Colonic mucosa (tissue), 4 donors: ENCODE measurements at regions of chr17 and their contacts with region 1.

Region 1: DNA sequence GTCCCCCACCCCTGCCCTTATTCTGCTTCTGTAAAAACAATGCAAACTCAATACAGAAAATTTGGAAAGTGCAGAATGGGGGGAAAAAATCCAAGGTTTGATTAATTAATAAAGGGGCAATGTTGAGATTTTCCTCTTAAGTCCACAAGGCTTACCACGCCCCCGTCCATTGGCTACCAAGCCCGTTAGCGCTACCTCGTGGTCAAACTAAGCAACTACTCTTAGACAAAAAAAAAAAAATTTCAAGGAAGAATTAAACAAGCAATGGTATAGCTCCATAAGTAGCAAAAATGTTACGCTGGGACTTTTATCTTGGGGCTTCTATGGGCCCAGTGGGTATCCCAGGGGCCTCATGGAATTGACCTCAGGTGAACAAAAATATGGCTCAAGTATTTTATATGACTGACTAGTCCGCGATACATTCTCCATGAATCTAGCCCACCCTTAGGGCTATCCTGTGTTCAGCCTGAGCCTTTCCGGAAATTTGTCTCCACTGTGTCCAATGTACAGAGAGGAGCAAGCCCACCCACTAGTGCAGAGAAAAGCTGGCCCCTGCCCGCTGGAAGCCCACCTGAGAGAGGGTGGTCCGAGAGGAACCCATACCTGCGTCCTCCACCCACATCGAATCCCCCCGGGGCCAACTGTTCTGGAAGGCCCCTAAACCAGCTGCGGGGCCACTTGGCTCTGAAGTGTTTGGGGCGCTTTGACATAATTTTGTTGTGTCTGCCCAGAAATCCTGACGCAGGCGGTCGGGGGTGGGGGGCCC is 19.1 kb upstream of the TEX2 start:
- DNase-seq: peak; percentile 32
- H3K4me3 ChIP-seq: no peak overlapping the region
- H3K27ac ChIP-seq: no peak overlapping the region
- H3K4me1 ChIP-seq: peaks cover 4% of the 10 kb centered on the region
- H3K27me3 ChIP-seq: no peaks in the 10 kb centered on the region
- CTCF ChIP-seq: peak; percentile 71

Region 2: DNA sequence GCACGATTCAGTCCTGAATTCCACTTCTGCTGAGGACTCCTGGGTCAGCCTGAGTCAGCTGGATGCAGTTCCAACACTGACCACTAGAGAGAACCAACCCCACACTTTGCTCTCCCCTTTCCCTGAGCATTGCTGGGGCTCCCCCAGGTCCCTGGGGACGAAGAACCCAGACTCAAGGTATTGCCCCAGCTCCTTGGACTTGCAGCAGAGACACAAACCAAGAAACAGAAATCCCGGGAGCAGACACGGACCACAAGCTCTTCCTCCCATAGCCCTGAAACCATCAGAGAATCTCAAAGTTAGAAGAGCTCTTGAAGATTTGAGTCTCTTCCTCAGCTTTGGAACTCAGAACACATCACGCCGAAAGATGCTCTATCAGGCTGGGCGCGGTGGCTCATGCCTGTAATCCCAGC is 362.8 kb before region 1 on chr17:
- intact Hi-C with region 1: loop called (anchors 10 kb)
- DNase-seq: peak; percentile 65
- H3K4me3 ChIP-seq: no peak overlapping the region
- H3K27ac ChIP-seq: no peak overlapping the region
- H3K4me1 ChIP-seq: no peaks in the 10 kb centered on the region
- H3K27me3 ChIP-seq: no peaks in the 10 kb centered on the region
- CTCF ChIP-seq: peak; percentile 97

Region 3: DNA sequence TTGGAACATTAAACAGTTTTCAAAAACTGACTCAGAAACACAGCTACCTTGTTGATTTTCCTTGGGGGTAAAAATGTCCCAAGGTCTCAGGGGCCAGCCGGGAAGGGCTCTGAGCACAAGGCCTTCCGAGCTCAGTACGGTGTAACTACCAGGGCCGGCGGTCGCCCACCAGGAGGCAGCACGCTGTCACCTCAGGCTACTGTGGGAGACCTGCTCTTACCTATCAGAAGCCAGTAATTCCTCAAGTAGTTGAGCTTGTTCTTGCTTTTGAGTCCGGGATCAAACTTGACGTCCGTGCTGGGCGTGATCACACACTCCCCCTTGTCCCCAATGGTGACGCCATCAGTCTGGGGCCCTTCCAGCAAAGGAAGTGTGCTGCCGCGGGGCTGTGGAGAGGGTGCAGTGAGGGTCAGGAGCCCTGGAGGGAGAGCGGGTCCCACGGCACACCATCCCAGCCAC is 218.3 kb before region 1 on chr17:
- intact Hi-C with region 1: loop called (anchors 5 kb)
- DNase-seq: peak; percentile 74
- H3K4me3 ChIP-seq: no peak overlapping the region
- H3K27ac ChIP-seq: peak overlapping the region; percentile 39
- H3K4me1 ChIP-seq: no peaks in the 10 kb centered on the region
- H3K27me3 ChIP-seq: no peaks in the 10 kb centered on the region
- CTCF ChIP-seq: peak; percentile 57

Region 4: GRCh38 chr17:64084086-64084939 is 197.8 kb before region 1 on chr17:
- intact Hi-C with region 1: no loop called
- DNase-seq: peak; percentile 68
- H3K4me3 ChIP-seq: no peak overlapping the region
- H3K27ac ChIP-seq: peak overlapping the region; percentile 58
- H3K4me1 ChIP-seq: peaks cover 14% of the 10 kb centered on the region
- H3K27me3 ChIP-seq: no peaks in the 10 kb centered on the region
- CTCF ChIP-seq: no peak

Region 5: DNA sequence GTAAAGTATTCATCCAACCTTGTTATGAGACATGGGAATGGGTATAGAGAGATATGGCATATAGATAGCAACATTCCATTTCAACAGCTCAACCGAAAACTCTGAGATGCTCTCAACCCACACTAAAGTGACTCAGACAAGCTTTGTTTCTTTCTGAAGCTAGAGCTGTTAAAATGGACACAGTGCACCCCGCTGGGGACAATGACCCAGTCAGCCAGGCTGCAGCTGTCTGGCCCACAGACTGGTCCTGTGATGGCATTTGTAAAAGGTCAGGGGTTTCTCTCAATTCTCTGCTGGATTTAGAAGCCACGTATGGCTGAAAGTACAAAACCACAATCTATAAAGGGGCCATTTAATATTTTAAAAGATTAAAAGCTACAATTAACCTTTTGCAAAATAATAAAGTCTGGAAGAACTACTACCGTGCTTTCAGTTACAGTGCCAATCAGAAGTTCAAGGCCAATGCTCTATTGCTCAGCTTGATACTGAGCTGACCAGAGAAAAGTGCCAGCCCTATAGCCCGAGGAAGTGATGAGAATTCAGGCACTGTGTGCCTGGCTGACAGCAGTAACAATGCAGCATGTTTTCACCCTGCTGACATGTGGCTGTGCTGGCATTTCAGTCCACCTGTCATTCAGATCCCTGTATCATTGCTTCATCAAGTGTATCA is 79.3 kb before region 1 on chr17:
- intact Hi-C with region 1: no loop called
- DNase-seq: no peak
- H3K4me3 ChIP-seq: no peak overlapping the region
- H3K27ac ChIP-seq: no peak overlapping the region
- H3K4me1 ChIP-seq: no peaks in the 10 kb centered on the region
- H3K27me3 ChIP-seq: no peaks in the 10 kb centered on the region
- CTCF ChIP-seq: no peak

Region 6: GRCh38 chr17:64216338-64217248 is 65.6 kb before region 1 on chr17:
- intact Hi-C with region 1: no loop called
- DNase-seq: peak; percentile 66
- H3K4me3 ChIP-seq: no peak overlapping the region
- H3K27ac ChIP-seq: peak overlapping the region; percentile 62
- H3K4me1 ChIP-seq: peaks cover 9% of the 10 kb centered on the region
- H3K27me3 ChIP-seq: no peaks in the 10 kb centered on the region
- CTCF ChIP-seq: no peak